Heart right ventricle (tissue), 16 donors: ENCODE measurements at regions of chr16 and their contacts with region 1.

Region 1: GRCh38 chr16:71453036-71453435 is 9.0 kb downstream of the ZNF23 start:
- DNase-seq: no peak
- ATAC-seq: no peak
- H3K4me3 ChIP-seq: no peak overlapping the region
- H3K27ac ChIP-seq: no peak overlapping the region
- H3K4me1 ChIP-seq: no peaks in the 10 kb centered on the region
- H3K27me3 ChIP-seq: no peaks in the 10 kb centered on the region
- CTCF ChIP-seq: no peak

Region 2: DNA sequence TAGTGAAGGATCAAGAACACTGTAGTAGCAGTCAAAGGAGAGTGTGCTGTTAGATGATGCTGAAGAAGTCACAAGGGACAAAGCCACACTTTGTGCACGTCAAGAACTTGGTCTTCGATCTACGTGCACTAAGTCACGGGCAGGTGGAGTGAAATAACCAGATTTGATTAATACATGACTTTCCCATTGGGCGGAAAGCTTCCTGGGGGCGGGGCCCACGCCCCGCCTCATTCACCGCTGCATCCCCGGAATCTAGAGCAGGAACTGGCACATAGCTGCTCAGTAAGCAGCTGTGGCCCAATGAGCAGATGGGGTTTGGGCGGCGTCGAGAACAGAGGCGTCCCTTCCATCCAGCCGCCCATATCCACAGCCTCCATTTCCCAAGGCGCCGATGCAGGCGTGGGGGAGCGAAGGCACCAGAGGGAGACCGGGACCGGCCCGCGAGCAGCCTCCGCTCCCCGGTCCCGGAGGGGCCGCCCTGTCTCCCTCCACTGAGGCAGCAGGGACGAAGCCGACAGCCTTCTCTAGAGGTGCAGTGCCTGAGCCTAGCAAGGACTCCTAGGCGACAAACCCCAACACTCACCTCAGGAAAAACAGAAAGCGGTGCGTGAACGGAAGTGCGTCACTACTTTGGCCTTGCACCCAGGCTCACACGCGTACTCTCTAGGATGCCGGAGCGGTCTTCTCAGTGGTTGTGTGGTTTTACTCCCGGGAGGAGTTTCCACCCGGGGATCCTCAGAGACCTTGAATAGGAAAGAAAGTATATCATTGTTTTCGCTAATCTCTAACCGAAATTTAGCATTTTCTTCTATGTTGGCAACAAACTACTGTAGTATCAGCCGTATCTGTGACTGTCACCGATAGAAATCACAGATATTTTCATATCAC is 31.2 kb after region 1 on chr16:
- intact Hi-C with region 1: loop called in 1 of 10 experiments (anchors 5 kb)
- DNase-seq: peak; percentile 78 to 90
- ATAC-seq: peak; percentile 96 to 99 (median 98)
- H3K4me3 ChIP-seq: peak overlapping the region; percentile 61 to 99 (median 78)
- H3K27ac ChIP-seq: peak overlapping the region; percentile 79 to 99 (median 94)
- H3K4me1 ChIP-seq: peaks cover 0 to 14% (median 10%) of the 10 kb centered on the region in 9 donors
- H3K27me3 ChIP-seq: no peaks in the 10 kb centered on the region
- CTCF ChIP-seq: no peak

Region 3: DNA sequence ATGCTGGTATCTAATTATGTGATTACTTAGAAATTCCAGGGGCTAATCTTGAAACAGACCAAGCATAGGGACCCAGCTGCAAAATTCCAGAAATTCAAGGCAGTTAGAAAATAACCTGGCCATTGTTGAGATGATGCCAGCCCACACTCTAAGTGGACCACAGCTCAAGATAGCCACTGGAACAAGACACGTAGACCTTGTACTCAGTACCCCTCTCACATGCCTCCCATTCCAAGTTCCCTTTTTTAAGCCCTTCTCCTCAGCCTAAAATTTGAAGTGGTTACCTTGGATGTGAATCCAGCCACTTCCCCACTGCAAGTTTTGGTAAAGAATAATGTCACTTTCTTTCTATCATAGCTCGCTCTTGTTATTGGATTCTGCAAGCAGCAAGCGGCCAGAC is 40.2 kb after region 1 on chr16:
- intact Hi-C with region 1: loop called in 2 of 10 experiments (anchors 5 kb)
- DNase-seq: no peak
- ATAC-seq: no peak
- H3K4me3 ChIP-seq: no peak overlapping the region
- H3K27ac ChIP-seq: no peak overlapping the region
- H3K4me1 ChIP-seq: no peaks in the 10 kb centered on the region
- H3K27me3 ChIP-seq: peaks cover 0 to 6% (median 0%) of the 10 kb centered on the region in 7 donors
- CTCF ChIP-seq: no peak

Region 4: GRCh38 chr16:71658771-71659170 is 205.7 kb after region 1 on chr16:
- intact Hi-C with region 1: no loop called
- DNase-seq: no peak
- ATAC-seq: no peak
- H3K4me3 ChIP-seq: no peak overlapping the region
- H3K27ac ChIP-seq: no peak overlapping the region
- H3K4me1 ChIP-seq: no peaks in the 10 kb centered on the region
- H3K27me3 ChIP-seq: no peaks in the 10 kb centered on the region
- CTCF ChIP-seq: no peak